ENCODE measurements at regions of chr13 and their contacts with region 1.

Region 1: DNA sequence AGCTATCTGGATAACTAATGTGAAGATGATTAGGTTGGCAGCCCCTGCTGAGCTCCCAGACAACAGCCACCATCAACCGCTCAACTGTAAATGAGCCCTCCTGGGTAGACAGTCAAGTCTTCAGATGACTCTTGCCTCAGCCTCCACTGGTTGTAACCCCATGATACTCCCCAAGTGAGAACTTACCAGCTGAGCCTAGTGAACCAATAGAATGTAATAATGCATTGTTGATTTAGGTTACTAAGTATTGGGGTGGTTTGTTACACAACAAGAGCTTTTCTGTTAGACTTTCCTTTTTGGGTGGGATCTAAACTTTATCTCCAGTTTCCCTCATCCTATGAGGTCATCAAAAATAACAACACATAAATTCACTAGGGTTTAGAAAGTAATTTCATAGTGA is 69.4 kb downstream of the CYSLTR2 start:
- DNase-seq: no peak
- ATAC-seq: no peak

Region 2: GRCh38 chr13:48749699-48750473 is 26.7 kb after region 1 on chr13:
- intact Hi-C with region 1: loop called (anchors 2 kb)
- DNase-seq: peak; percentile 87
- ATAC-seq: peak; percentile 96

Measured in sciatic nerve (tissue), 2 donors.